Posterior vena cava (tissue), 2 donors: ENCODE measurements at regions of chr11 and their contacts with region 1.

Region 1: DNA sequence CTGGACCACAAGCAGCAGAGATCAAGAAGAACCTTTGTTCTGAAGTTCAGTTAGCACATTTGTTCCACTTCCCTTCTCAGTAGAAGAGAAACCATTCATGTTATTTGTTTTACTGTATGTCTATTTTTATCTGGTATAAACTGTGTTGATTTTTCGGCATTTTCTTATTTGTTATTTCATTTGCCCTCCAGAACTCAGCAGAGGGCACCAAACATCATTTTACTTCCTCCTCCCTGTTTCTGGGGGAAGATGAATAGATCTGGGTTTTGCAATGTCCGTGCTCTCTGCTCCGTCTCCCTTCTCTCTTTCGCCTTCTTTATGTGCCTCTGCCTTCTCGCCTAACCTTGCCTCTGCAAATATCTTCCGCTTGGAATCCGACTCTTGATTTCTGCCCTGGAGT is 366.9 kb downstream of the NTM start:
- DNase-seq: no peak

Region 2: DNA sequence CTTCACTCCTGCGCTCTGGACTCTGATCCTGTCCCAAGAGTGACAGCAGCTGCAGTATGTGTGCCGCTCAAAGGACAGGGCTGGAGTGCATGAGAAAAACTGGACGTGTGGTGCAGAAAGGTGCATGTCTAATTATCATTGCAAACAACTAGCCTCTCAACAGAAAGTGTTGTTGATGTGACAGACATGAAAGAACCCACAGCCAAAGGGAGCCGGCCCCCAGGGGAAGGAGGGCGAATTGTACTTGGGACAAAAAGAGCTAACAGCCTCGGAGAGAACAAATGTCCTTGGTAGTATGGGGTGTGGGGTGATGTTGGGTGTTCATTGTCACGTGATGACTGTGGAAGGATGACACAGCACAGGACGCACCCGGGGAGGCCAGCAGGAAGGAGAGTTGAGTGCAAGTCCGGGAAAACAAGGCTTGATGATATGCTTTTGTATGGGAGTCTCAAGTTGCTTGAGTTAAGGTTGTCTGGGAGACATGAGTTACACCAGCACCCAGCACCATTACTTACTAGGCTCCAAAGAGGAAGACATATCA is 41.4 kb before region 1 on chr11:
- intact Hi-C with region 1: loop called in 1 of 2 experiments (anchors 1 kb)
- DNase-seq: no peak

Region 3: DNA sequence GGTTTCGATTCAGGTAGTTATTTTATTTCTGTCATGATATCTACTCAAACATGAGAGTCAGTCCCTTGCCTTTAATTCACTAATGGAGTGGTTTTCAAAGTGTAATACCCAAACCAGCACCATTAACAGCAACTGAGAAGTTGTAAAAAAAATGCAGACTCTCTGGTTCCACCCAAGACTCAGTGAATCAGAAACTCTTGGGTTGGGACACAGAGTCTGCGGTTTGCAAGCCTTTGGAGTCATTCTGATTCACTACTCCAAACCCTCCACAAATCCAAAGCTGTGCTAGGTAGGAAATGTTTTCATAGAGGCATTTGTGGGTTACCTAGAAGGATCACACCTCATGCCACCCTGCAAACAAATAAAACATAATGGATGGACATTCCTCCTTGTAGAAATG is 26.8 kb before region 1 on chr11:
- intact Hi-C with region 1: no loop called
- DNase-seq: no peak

Region 4: GRCh38 chr11:132347156-132348090 is 610.1 kb after region 1 on chr11:
- intact Hi-C with region 1: no loop called
- DNase-seq: no peak